Activated naive CD4-positive, alpha-beta T cell treated with anti-CD3 and anti-CD28 coated beads, Interleukin-2, amount 10 ng/mL, durations not matched to agents 7 days and 5 days (primary cell): ENCODE measurements at regions of chr6 and their contacts with region 1.

Region 1: DNA sequence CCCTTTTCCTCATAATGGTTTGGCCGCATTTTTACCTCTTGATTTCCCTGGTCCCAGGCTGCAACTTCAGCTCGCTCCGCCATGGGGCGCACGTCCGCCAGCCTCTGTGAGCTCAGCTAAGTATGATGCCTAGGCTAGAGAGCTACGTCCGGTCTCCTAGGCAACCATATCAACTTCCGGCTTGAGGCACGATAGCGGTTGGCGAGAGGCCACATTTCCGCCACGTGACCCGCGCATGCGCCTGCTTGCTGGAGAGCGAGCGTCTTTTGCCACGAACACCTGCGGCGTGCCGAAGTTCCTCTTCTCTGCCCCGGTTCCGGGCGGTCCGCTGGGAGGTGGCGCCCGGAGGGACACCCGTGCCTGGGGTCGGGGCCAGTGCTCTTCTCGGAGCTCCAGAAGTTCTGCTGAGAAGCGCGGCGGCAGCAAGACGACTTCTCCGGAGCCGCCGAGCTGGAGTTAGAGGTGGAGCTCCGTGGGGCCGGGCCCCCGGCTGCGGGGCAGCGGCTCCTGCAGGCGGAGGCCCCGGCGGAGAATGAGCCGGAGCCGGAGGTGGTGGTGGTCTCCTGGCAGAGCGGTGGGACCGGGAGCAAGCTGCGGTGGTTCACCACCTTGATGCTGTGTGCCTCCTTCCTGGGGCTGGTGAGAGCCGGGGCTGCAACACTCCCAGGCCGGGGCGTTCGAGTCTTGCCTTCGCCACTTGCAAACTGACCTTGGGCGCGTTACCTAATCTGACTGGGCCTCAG is 172.0 kb downstream of the SLC16A10 start:
- DNase-seq: peak; percentile 99
- H3K4me3 Mint-ChIP-seq: peak overlapping the region; percentile 82
- H3K27ac Mint-ChIP-seq: peak overlapping the region; percentile 91
- H3K4me1 Mint-ChIP-seq: peaks cover 38% of the 10 kb centered on the region
- H3K27me3 Mint-ChIP-seq: peaks cover 12% of the 10 kb centered on the region

Region 2: DNA sequence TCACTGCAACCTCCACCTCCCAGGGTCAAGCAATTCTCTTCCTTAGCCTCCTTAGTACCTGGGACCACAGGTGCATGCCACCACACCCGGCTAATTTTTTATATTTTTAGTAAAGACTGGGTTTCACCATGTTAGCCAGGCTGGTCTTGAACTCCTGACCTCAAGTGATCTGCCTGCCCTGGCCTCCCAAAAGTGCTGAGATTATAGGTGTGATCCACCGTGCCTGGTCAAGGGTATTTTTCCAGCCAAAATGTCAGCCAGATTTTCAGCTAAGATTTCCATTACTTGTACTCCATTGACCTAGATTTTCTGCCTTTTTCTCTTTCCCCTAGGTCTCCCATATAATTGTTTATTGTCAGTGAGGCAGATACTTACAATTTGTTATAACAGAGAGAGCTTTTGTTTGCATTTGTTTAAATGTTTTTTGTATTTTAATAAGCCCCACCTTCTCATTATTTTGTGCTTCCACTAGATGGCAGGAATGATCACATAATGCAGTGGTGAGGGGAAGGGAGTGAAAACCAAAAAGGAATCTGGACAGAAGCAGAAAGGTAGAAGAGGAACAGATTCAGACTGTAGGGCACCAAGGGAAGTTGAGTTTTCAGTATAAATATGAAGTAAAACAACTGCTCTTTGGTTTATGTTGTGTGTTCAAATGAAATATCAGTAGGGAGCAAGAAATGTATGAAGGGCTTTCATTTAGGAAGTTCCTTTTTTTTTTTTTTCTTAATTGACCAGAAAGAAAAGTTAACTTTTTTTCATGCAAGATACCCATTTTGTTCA is 247.7 kb before region 1 on chr6:
- CTCF ChIA-PET with region 1: interaction called, 12 read pairs
- DNase-seq: no peak
- H3K4me3 Mint-ChIP-seq: no peak overlapping the region
- H3K27ac Mint-ChIP-seq: no peak overlapping the region
- H3K4me1 Mint-ChIP-seq: peaks cover 4% of the 10 kb centered on the region
- H3K27me3 Mint-ChIP-seq: no peaks in the 10 kb centered on the region

Region 3: GRCh38 chr6:111322153-111322552 is 62.9 kb after region 1 on chr6:
- CTCF ChIA-PET with region 1: no interaction called
- DNase-seq: no peak
- H3K4me3 Mint-ChIP-seq: no peak overlapping the region
- H3K27ac Mint-ChIP-seq: no peak overlapping the region
- H3K4me1 Mint-ChIP-seq: no peaks in the 10 kb centered on the region
- H3K27me3 Mint-ChIP-seq: no peaks in the 10 kb centered on the region

Region 4: DNA sequence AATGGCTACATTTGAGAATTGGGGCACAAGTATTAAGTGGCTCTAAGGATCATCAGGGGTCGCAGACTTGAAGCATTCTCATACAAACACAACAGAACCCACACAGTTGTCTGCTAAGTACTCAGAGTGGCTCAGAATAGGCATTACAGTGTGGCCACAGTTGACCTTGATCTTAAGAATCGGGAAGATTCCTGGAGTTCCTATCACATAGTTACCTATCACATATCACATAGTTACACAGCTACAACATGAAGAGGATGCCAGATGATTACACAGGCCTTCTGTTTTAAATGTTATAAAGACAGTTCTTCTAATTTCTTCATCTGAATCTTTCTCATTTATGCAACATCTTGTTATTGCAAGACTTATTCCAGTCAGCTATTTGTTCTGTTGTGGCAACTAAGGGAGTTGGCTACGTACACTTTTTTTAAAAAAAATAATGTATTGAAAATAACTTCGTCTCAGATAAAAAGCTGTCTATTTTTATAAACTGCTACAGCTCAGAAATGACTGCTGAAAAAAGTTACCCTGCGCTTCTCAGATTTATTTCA is 94.7 kb after region 1 on chr6:
- CTCF ChIA-PET with region 1: no interaction called
- DNase-seq: no peak
- H3K4me3 Mint-ChIP-seq: no peak overlapping the region
- H3K27ac Mint-ChIP-seq: no peak overlapping the region
- H3K4me1 Mint-ChIP-seq: no peaks in the 10 kb centered on the region
- H3K27me3 Mint-ChIP-seq: no peaks in the 10 kb centered on the region

Region 5: DNA sequence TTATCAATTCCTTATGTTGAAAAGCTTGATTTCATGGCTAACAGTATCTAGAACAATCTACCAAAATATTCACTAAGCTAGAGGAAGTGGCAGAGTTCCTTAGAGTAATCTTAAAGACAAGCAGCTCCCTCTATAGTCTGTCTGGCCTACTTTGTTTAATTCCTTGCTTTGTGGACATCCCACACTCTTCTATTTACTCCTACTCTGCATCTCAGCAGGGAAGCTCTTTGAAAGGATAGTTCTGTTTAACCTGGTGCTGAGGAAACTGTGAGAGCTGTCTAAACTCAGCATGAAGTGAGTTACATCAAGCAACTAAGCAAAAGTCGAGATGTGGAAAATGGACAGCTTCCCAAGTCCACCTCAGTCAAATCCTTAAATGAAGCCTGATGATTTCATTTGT is 219.5 kb after region 1 on chr6:
- CTCF ChIA-PET with region 1: interaction called, 108 read pairs
- DNase-seq: no peak
- H3K4me3 Mint-ChIP-seq: no peak overlapping the region
- H3K27ac Mint-ChIP-seq: peak overlapping the region; percentile 72
- H3K4me1 Mint-ChIP-seq: peaks cover 31% of the 10 kb centered on the region
- H3K27me3 Mint-ChIP-seq: no peaks in the 10 kb centered on the region

Region 6: DNA sequence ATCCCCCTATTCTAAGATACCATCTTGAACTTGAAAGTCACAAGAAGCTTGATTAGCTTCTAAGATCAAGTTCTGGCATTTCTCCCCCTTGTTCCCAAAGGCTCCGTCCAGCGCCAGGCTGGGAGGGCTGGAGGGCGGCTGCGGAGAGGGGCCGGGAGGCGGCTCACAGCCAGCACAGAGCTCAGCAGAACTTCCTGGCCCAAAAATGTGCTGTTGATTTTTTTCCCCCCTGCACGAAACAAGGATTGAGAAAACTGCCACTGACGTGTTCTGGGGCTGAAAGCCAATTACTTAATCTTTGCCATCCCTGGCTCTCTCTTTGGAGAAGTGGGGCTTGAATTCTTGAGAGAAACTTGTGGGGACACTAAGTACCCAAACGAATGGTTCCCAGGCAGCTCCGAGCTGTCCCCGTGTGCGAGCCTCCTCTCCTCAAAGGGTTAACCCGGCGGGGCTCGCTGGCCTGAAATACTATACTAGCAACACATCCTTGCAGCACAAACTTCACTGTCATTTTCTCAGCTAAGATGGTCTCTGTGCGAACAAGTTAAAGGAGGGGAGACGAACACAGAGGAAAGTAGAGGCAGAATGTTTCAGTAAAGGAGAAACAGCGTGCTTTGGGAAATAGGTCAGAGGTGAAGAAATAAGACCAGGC is 346.0 kb after region 1 on chr6:
- CTCF ChIA-PET with region 1: interaction called, 15 read pairs
- DNase-seq: peak; percentile 50
- H3K4me3 Mint-ChIP-seq: peak overlapping the region; percentile 81
- H3K27ac Mint-ChIP-seq: peak overlapping the region; percentile 87
- H3K4me1 Mint-ChIP-seq: peaks cover 53% of the 10 kb centered on the region
- H3K27me3 Mint-ChIP-seq: no peaks in the 10 kb centered on the region

Region 7: GRCh38 chr6:111642463-111643158 is 383.4 kb after region 1 on chr6:
- CTCF ChIA-PET with region 1: interaction called, 16 read pairs
- DNase-seq: peak; percentile 64
- H3K4me3 Mint-ChIP-seq: no peak overlapping the region
- H3K27ac Mint-ChIP-seq: no peak overlapping the region
- H3K4me1 Mint-ChIP-seq: peaks cover 5% of the 10 kb centered on the region
- H3K27me3 Mint-ChIP-seq: no peaks in the 10 kb centered on the region